ENCODE measurements at regions of chr1 and their contacts with region 1.

Region 1: GRCh38 chr1:97243973-97244560 is 522.5 kb downstream of the PTBP2 start:
- DNase-seq: peak; percentile 48
- H3K4me3 ChIP-seq: no peak overlapping the region
- H3K27ac ChIP-seq: no peak overlapping the region
- H3K4me1 ChIP-seq: no peaks in the 10 kb centered on the region
- H3K27me3 ChIP-seq: no peaks in the 10 kb centered on the region
- CTCF ChIP-seq: peak in 1 of 2 donors; percentile 35
- POLR2A ChIP-seq: no peak

Region 2: GRCh38 chr1:97137862-97138514 is 106.1 kb before region 1 on chr1:
- CTCF ChIA-PET with region 1: interaction called, 12 read pairs
- POLR2A ChIA-PET with region 1: no interaction called
- dilution Hi-C with region 1: no loop called
- intact Hi-C with region 1: no loop called
- DNase-seq: peak; percentile 95
- H3K4me3 ChIP-seq: no peak overlapping the region
- H3K27ac ChIP-seq: peak overlapping the region; percentile 27
- H3K4me1 ChIP-seq: peaks cover 10% of the 10 kb centered on the region
- H3K27me3 ChIP-seq: no peaks in the 10 kb centered on the region
- CTCF ChIP-seq: peak; percentile 52 to 65
- POLR2A ChIP-seq: no peak

Region 3: DNA sequence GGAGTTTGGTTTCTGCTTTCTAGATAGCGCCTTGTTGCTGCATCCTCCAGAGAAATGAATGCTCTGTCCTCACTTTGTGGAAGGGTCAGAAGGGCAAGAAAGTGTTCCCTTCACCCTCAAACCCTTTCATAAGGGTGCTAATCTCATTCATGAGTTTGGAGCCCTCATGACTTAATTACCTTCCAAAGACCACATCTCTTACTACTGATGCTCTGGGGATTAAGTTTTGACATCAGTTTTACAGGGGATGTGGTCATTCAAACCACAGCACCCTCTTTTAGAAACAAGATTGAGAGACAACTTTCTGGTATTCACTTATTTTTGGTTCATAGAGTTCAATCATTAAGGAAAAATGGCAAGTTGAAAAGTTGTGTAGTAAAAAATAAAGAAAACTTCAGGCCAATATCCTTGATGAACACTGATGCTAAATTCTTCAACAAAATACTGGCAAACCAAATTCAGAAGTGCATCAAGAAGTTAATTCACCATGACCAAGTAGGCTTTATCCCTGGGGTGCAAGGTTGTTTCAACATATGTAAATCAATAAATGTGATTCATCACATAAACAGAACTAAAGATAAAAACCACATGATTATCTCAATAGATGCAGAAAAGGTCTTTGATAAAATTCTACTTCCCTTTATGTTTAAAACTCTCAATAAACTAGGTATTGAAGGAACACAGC is 80.3 kb before region 1 on chr1:
- CTCF ChIA-PET with region 1: no interaction called
- POLR2A ChIA-PET with region 1: no interaction called
- dilution Hi-C with region 1: no loop called
- intact Hi-C with region 1: no loop called
- DNase-seq: no peak
- H3K4me3 ChIP-seq: no peak overlapping the region
- H3K27ac ChIP-seq: no peak overlapping the region
- H3K4me1 ChIP-seq: no peaks in the 10 kb centered on the region
- H3K27me3 ChIP-seq: no peaks in the 10 kb centered on the region
- CTCF ChIP-seq: no peak
- POLR2A ChIP-seq: no peak

Region 4: GRCh38 chr1:97524211-97524610 is 280.1 kb after region 1 on chr1:
- CTCF ChIA-PET with region 1: interaction called, 39 read pairs
- POLR2A ChIA-PET with region 1: no interaction called
- dilution Hi-C with region 1: no loop called
- intact Hi-C with region 1: loop called (anchors 1 kb)
- DNase-seq: no peak
- H3K4me3 ChIP-seq: no peak overlapping the region
- H3K27ac ChIP-seq: no peak overlapping the region
- H3K4me1 ChIP-seq: no peaks in the 10 kb centered on the region
- H3K27me3 ChIP-seq: no peaks in the 10 kb centered on the region
- CTCF ChIP-seq: no peak
- POLR2A ChIP-seq: no peak

Region 5: DNA sequence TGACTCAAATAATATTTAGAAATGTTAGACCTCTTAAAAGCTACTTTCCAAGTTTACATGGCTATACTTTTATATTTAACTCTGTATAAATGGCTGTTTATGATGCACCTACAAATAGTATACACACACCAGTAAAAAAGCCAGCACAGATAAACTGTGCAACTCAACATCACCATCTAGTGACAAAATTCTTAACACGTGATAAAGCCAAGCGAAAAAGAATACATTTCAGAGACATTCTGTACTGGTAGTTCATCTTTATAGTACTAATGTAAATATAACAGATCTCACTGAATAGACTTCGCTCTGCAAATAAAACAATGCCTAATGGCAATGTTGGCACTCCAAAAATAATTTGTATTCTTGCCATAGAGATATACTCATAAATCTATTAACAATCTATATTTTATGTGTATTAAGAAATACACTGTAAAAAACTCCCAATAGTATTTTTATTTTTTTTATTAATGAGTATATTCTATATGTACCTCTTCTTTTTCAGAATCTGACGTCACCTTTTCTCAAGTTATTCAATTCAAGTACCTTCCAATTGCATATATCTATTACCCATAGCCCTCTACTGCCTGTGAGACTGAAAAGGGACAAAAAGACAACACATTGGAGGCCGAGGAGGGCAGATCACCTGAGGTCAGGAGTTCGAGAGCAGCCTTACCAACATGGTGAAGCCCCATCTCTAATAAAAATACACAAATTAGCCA is 576.6 kb after region 1 on chr1:
- CTCF ChIA-PET with region 1: interaction called, 11 read pairs
- POLR2A ChIA-PET with region 1: no interaction called
- dilution Hi-C with region 1: no loop called
- intact Hi-C with region 1: loop called (anchors 1 kb)
- DNase-seq: peak; percentile 62
- H3K4me3 ChIP-seq: no peak overlapping the region
- H3K27ac ChIP-seq: no peak overlapping the region
- H3K4me1 ChIP-seq: no peaks in the 10 kb centered on the region
- H3K27me3 ChIP-seq: no peaks in the 10 kb centered on the region
- CTCF ChIP-seq: peak; percentile 21 to 29
- POLR2A ChIP-seq: no peak